Activated CD4-positive, alpha-beta T cell treated with anti-CD3 and anti-CD28 coated beads for 36 hours (primary cell): ENCODE measurements at regions of chr22 and their contacts with region 1.

Region 1: DNA sequence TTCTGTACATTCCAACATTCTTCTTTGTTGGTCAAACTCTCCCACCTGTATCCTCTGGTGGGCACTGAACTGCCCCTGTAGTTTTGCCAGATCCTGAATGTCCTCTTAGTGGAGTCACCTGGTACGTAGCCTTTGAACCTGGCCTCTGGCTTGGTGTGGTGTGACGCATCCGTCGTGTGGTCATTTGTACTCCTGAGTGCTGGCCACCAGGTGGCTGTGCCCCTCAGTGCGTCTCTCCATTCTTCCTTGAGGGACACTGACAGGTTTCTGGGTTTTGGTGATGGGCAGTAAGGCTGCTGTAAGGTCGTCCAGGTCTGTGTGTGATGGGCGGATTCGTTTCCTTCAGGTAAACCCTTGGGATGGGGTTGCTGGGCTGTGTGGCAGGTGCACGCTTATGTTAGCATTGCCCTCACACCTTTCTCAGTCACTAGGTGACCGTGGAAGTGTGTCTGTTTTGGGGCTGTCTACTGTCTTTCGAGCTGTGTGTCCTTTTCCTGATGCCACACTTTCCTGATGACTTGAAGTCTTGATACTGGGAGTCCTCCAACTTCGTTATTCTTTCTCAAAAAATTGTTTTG is 13.6 kb upstream of the RANBP1 start:
- DNase-seq: no peak
- ATAC-seq: no peak
- H3K4me3 Mint-ChIP-seq: no peak overlapping the region
- H3K27ac Mint-ChIP-seq: peak overlapping the region; percentile 83
- H3K4me1 Mint-ChIP-seq: peaks cover 49% of the 10 kb centered on the region
- H3K27me3 Mint-ChIP-seq: no peaks in the 10 kb centered on the region

Region 2: GRCh38 chr22:19524170-19525115 is 577.8 kb before region 1 on chr22 and contains the start of gene CLDN5:
- CTCF ChIA-PET with region 1: no interaction called
- POLR2A ChIA-PET with region 1: no interaction called
- intact Hi-C with region 1: no loop called
- DNase-seq: no peak
- ATAC-seq: peak; percentile 31
- H3K4me3 Mint-ChIP-seq: peak within 1 kb of the TSS; percentile 19
- H3K27ac Mint-ChIP-seq: no peak within 1 kb of the TSS
- H3K4me1 Mint-ChIP-seq: peaks cover 5% of the 10 kb centered on the region
- H3K27me3 Mint-ChIP-seq: peaks cover 26% of the 10 kb centered on the region
- total RNA-seq, gene CLDN5: not detected

Region 3: DNA sequence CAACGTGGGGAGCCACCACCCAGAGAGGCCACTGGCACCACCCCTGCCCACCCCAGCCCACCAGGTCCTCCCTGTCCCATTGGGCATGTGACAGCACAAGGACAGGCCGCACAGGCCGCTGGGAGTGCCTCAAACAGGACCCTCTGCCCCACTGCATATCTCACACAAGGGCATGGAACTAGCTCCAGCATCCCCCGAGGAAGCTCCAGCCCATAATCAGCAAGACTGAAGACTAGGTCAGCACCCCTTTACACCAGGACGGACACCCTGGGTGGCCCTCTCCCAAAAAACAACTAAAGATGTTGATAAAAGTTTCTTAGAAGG is 277.3 kb before region 1 on chr22:
- CTCF ChIA-PET with region 1: no interaction called
- POLR2A ChIA-PET with region 1: no interaction called
- intact Hi-C with region 1: no loop called
- DNase-seq: no peak
- ATAC-seq: no peak
- H3K4me3 Mint-ChIP-seq: no peak overlapping the region
- H3K27ac Mint-ChIP-seq: no peak overlapping the region
- H3K4me1 Mint-ChIP-seq: peaks cover 5% of the 10 kb centered on the region
- H3K27me3 Mint-ChIP-seq: no peaks in the 10 kb centered on the region

Region 4: GRCh38 chr22:20037419-20037818 is 64.9 kb before region 1 on chr22:
- CTCF ChIA-PET with region 1: no interaction called
- POLR2A ChIA-PET with region 1: no interaction called
- intact Hi-C with region 1: loop called in 1 of 2 experiments (anchors 5 kb)
- DNase-seq: peak; percentile 24
- ATAC-seq: peak; percentile 85
- H3K4me3 Mint-ChIP-seq: no peak overlapping the region
- H3K27ac Mint-ChIP-seq: peak overlapping the region; percentile 67
- H3K4me1 Mint-ChIP-seq: peaks cover 17% of the 10 kb centered on the region
- H3K27me3 Mint-ChIP-seq: no peaks in the 10 kb centered on the region

Region 5: DNA sequence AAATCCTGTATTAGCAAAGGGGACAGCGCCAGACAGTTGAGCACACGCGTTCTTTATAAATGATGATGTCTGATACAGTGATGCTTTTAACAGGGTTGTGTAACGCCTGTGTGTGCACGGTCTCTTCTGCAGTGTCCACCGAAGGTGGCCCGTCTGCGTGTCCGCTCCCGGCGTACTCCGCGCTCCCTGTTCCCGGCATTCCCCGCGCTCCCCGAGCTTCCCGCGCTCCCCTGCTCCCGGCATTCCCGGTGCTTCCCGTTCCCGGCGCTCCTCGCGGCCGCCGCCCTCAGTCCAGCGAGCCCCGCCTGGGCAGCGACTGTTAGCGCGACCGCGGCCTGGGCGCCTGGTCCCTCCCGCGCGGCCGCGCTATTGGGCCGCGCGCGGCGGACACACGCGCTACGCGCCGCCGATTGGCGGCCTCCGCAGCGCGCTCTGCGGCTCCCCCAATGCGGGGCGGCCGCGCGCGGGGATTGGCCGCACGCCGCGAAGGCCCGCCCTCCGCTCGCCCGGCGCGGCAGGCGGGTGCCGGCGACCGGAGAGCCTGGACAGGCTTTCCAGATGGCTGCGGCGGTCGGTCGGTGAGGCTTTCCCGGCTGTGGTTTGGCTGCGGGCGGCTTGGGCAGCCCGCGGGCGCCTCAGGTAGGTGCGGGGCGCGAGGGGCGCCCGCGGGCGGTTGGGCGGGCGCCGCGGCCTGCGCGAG is 22.4 kb before region 1 on chr22 and contains the start of gene DGCR8:
- CTCF ChIA-PET with region 1: interaction called, 3 read pairs
- POLR2A ChIA-PET with region 1: interaction called, 4 read pairs
- intact Hi-C with region 1: loop called (anchors 1 to 2 kb)
- DNase-seq: peak; percentile 78
- ATAC-seq: peak; percentile 92
- H3K4me3 Mint-ChIP-seq: peak within 1 kb of the TSS; percentile 88
- H3K27ac Mint-ChIP-seq: peak within 1 kb of the TSS; percentile 80
- H3K4me1 Mint-ChIP-seq: peaks cover 36% of the 10 kb centered on the region
- H3K27me3 Mint-ChIP-seq: no peaks in the 10 kb centered on the region
- total RNA-seq, gene DGCR8: 31.8 to 32.3 TPM

Region 6: DNA sequence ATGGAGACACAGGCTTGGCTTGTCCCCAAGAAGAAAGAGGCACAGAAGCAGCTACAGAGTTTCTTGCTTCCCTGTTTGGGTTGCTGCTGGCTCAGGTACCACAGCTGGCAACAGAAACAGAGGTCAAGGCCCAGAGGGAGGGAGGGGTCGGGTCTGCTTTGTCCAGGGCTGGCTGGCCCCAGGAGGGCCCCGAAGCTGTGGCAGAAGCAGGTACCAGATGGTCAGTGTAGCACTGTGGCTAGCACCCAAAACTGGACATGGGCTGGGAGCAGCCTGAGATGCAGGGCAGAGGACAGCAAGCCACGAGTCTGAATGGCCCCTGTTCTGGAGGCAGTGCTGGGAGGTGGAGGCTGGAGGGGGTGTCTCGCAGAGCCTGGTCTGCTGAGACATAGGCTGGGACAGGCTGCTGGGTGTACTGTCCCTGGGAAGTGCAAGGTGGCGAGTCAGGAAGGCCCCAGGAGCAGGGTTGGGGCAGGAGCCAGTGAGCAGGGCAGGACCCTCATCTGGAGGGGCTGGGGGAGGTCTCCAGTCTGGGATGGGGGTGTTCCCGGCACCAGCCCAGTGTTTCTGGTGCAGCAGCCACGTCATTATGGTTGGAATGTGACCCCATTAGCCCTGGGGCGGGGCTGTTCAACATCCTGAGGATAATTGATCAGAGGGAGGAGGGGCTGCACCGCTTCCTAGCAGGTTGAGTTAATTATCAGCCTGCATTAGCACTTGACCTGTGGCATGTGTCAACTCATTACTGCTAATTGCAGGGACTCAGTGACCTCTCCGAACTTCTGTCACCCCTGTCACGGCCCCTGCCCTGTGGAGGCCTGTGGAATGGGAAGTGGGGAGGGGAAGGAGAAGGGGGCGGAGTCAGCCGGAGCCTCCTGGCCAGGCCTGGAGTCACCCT is 101.1 kb after region 1 on chr22:
- CTCF ChIA-PET with region 1: no interaction called
- POLR2A ChIA-PET with region 1: no interaction called
- intact Hi-C with region 1: no loop called
- DNase-seq: no peak
- ATAC-seq: no peak
- H3K4me3 Mint-ChIP-seq: no peak overlapping the region
- H3K27ac Mint-ChIP-seq: no peak overlapping the region
- H3K4me1 Mint-ChIP-seq: peaks cover 22% of the 10 kb centered on the region
- H3K27me3 Mint-ChIP-seq: no peaks in the 10 kb centered on the region